Dorsolateral prefrontal cortex (tissue), 120 donors: ENCODE measurements at regions of chr5 and their contacts with region 1.

Region 1: DNA sequence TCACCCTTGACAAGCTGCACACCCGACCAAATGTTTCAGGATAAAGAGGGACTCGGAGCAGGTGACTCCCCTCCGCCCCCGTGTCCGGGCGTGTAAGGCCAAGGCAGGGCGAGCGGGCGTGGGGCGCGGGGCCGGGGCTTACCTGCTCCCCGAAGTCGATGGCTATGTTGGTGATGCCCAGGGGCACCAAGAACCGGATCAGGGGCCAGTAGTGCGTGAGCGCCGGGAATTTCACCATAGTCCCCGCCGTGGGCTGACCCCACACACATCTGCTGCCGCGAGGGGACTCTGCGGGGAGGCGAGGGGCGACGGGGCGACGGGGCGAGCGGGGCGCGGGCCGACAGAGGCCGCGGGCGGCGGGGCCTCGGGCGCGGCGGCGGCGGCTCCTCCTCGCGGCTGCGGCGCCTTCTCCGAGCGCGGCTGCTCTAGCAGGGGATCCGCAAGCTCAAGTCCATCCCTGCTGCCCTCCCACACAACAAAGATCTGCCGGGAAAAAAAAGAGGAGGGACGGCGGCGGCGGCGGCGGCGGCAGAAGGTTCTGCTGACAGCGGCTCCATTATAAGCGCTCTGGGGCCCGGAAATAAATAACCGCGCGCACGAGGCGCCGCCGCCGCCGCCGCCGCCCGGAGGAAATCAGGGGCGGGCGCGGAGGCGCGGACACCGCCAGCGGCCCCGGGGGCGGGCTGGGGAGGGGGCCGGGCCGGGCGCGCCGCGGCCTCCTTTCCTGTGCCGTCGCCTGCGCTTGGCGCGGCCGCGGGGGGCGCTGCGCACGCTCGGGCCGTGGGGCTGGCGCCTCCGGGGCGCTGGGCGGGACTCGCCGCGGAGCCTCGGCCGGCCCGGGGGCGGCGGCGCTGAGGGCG is at the start of gene ANKH:
- DNase-seq: peak; percentile 42 to 85 (median 64)
- H3K4me3 ChIP-seq: peak within 1 kb of the TSS; percentile 63 to 97 (median 87)
- H3K27ac ChIP-seq: peak within 1 kb of the TSS; percentile 55 to 97 (median 92)
- H3K27me3 ChIP-seq: no peaks in the 10 kb centered on the region
- CTCF ChIP-seq: peak in 1 of 56 donors; percentile 4
- total RNA-seq, gene ANKH: 182 to 332 (median 241) TPM

Region 2: GRCh38 chr5:14664302-14665100 is 206.9 kb before region 1 on chr5 and contains the start of gene OTULIN:
- intact Hi-C with region 1: loop called (anchors 2 to 5 kb)
- DNase-seq: peak; percentile 78 to 95 (median 86)
- H3K4me3 ChIP-seq: peak within 1 kb of the TSS; percentile 46 to 97 (median 81)
- H3K27ac ChIP-seq: peak within 1 kb of the TSS; percentile 43 to 97 (median 91)
- H3K27me3 ChIP-seq: no peaks in the 10 kb centered on the region
- CTCF ChIP-seq: peak in 28 of 56 donors; percentile 3 to 53 (median 25)
- total RNA-seq, gene OTULIN: 14.9 to 36.1 (median 22.3) TPM

Region 3: DNA sequence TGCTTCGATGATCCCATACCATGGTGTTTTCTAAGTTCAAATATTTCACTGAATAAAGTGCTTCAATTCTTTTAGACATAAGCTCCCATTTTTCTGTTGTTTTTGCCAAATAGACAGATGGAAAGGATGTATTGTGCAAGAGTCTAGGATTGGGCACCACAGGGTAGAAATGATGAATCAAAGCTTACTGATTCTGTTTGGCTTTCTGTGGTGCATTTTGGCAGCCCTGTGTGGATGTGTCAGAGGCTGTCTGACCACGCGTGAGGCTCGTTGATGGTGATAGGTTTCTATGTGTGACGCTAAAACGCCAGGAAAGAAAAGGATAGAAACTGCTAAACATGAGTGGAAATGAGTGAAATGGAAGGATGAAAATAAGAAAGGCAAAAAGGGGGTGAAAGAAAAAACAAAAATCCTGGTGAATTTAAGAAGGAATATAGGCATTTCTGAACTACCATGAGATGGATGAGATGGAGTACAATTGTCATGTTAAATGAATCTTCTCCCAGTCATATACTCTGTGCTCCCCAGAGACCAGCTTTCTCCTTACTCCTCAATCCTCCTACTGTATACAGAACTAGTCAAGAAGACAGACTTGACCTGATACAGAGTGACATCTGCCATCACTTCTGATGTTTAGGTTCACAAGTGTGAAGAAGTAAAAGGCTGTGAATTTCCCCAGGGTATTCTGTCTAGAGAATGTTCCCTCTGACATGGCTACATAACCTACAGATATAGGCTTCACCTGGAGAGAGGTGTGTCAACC is 54.3 kb before region 1 on chr5:
- intact Hi-C with region 1: loop called (anchors 5 kb)
- DNase-seq: peak in 5 of 10 donors; percentile 30 to 77 (median 70)
- H3K4me3 ChIP-seq: no peak overlapping the region
- H3K27ac ChIP-seq: peak overlapping the region in 32 of 59 donors; percentile 2 to 75 (median 36)
- H3K27me3 ChIP-seq: no peaks in the 10 kb centered on the region
- CTCF ChIP-seq: no peak

Region 4: GRCh38 chr5:15105796-15106393 is 234.5 kb after region 1 on chr5:
- intact Hi-C with region 1: no loop called
- DNase-seq: peak in 4 of 10 donors; percentile 20 to 61 (median 34)
- H3K4me3 ChIP-seq: no peak overlapping the region
- H3K27ac ChIP-seq: no peak overlapping the region
- H3K27me3 ChIP-seq: peaks cover 0 to 3% (median 0%) of the 10 kb centered on the region in 45 donors
- CTCF ChIP-seq: peak; percentile 50 to 85 (median 76)